GM10248 (cell line): ENCODE measurements at regions of chr11 and their contacts with region 1.

Region 1: DNA sequence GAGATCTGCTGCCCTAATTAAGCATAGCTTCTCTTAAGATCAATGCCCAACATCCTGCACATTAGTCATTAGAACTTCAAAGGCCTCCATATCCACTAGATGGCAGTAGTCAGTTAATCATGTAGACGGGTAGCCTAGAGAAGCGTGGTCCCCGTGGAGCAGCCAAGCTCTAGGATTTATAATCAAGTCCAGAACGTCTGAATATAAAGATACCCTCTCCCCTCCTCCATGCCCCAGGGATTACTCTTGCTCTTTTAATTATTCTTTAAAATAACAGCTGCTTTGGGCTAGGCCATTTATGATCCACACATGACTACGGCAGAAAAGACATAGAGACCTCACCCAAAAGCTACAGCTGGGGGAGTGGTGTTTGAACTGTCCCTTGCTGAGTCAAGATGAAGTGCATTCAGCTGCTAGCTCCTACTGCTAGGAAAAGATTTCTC is 327.6 kb upstream of the PLET1 start:
- DNase-seq: peak; percentile 48
- CTCF ChIP-seq: peak; percentile 64

Region 2: DNA sequence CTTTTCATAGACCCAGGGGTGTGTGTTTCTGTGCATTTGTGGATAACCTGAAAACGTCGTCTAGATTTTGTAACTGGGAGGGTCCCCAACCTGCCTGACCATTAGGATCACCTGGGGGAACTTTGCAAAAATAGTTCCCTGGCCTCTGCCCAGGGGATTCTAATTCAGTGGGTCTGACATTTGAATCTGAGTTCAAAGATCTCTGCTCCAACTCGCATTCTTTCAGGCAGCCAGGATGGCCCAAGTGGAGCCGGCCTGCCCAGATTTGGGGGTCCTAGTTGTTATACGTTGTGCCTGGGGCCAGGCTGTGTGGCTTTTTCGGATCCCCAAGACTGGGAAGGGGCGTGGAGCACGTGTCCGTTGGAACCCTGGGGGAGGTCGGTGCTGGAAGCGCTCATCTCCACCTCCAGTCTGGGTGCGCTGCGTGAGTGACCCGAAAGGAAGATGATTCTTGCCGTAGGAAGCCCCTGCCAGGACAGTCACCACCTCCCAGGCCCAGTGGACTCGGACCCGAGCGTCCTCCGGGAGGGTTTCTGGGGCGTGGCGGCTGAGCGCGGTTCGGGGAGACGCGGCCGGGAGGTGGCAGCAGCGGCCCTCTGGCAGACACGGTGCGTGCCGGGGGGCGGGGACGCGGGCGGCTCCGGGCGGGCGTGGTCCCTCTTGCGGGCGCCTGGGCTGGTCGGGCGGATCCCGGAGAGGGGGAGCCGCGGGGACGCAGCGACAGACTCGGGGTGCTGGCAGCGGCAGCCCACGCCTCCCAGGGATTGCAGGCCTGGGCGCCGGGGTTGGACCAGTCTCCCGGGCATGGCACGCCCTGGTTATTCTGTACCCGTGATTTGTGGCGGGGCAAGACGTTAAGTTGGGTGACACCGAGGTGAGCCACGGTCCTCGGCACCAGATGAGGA is 298.4 kb before region 1 on chr11:
- CTCF ChIA-PET with region 1: interaction called, 11 read pairs
- POLR2A ChIA-PET with region 1: no interaction called
- DNase-seq: peak; percentile 88
- CTCF ChIP-seq: peak; percentile 90

Region 3: DNA sequence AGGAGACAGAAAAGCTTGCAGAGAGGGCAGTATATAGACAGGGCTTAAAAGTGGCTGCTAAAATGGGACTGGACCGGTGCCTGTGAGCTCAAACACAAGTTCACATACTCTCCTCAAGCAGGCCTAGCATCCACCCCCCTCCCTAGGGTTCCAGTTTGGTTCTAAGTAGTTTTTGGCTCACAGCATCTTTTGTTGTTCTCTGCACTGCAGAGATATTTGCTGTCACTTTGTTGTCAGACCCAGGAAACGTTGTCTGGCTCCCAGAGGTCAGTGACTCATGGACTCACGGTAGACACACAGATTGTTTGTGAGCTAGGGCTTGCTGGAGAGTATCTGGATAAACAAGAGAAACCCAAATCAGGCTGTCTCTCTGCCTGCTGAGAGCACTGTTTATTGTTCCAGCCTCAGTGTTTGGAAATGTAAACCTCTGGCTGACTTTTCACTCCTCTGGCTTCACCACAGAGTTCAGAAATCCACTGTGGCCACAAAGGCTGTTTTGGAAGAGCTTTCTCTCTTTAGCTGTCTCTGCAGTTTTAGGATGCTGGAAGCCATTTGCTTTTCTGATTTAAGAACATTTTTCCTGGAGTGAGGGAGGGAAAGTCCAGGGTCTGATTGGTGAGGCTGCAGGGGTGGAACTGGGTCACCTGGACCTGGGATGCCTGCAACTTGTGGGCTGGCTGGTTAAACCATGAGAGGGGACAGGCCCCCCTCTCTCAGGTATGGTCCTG is 23.9 kb before region 1 on chr11:
- CTCF ChIA-PET with region 1: interaction called, 12 read pairs
- POLR2A ChIA-PET with region 1: no interaction called
- DNase-seq: no peak
- CTCF ChIP-seq: no peak

Region 4: DNA sequence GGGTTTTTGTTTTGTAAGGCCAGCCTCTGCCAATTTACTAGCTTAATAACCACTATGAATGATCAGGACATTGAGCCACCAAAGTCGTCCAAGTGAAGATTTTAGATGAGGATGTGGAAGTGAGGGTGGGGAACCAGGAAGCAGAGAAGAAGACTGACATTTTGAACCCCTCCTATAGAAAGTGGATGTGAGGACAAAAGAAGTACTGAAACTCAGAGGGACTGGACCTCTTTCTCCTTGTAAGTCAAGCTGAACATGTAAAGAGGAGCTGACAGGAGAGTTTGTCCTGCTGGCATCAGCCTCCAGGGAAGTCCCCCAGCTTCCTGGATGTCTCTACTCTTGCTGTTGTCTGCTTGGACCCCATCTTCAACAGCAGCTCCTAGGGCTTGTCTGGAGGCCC is 34.8 kb after region 1 on chr11:
- CTCF ChIA-PET with region 1: interaction called, 10 read pairs
- POLR2A ChIA-PET with region 1: no interaction called
- DNase-seq: no peak
- CTCF ChIP-seq: no peak

Region 5: GRCh38 chr11:113113801-113114706 is 525.8 kb after region 1 on chr11:
- CTCF ChIA-PET with region 1: interaction called, 10 read pairs
- POLR2A ChIA-PET with region 1: no interaction called
- DNase-seq: no peak
- CTCF ChIP-seq: peak; percentile 40

Region 6: GRCh38 chr11:113289431-113290187 is 701.3 kb after region 1 on chr11:
- CTCF ChIA-PET with region 1: interaction called, 94 read pairs
- POLR2A ChIA-PET with region 1: no interaction called
- DNase-seq: peak; percentile 81
- CTCF ChIP-seq: peak; percentile 90